ENCODE measurements at regions of chr9 and their contacts with region 1.

Region 1: GRCh38 chr9:35267710-35268109 is 105.9 kb downstream of the UNC13B start:
- DNase-seq: no peak
- H3K4me3 ChIP-seq: no peak overlapping the region
- H3K27ac ChIP-seq: no peak overlapping the region
- H3K4me1 ChIP-seq: no peaks in the 10 kb centered on the region
- H3K27me3 ChIP-seq: no peaks in the 10 kb centered on the region
- CTCF ChIP-seq: no peak

Region 2: GRCh38 chr9:35470894-35471293 is 203.2 kb after region 1 on chr9:
- intact Hi-C with region 1: loop called (anchors 10 kb)
- DNase-seq: no peak
- H3K4me3 ChIP-seq: no peak overlapping the region
- H3K27ac ChIP-seq: no peak overlapping the region
- H3K4me1 ChIP-seq: no peaks in the 10 kb centered on the region
- H3K27me3 ChIP-seq: no peaks in the 10 kb centered on the region
- CTCF ChIP-seq: no peak

Measured in colonic mucosa (tissue), 4 donors.